ENCODE measurements at regions of chr6 and their contacts with region 1.

Region 1: GRCh38 chr6:137707590-137708360 is 159.3 kb upstream of the TNFAIP3 start:
- DNase-seq: peak; percentile 90 to 96 (median 92)
- H3K4me3 ChIP-seq: peak overlapping the region in 1 of 3 experiments; percentile 32
- H3K4me3 Mint-ChIP-seq: peak overlapping the region; percentile 65 to 88
- H3K27ac ChIP-seq: peak overlapping the region in 1 of 2 donors; percentile 62
- H3K27ac Mint-ChIP-seq: peak overlapping the region; percentile 82 to 95 (median 91)
- H3K4me1 ChIP-seq: peaks cover 25 to 28% of the 10 kb centered on the region in 2 donors
- H3K4me1 Mint-ChIP-seq: peaks cover 41% of the 10 kb centered on the region
- H3K27me3 ChIP-seq: no peaks in the 10 kb centered on the region
- H3K27me3 Mint-ChIP-seq: peaks cover 0 to 3% (median 2%) of the 10 kb centered on the region in 3 donors
- CTCF ChIP-seq: peak; percentile 93

Region 2: GRCh38 chr6:137791281-137792159 is 83.7 kb after region 1 on chr6:
- intact Hi-C with region 1: loop called in 1 of 2 experiments (anchors 5 kb)
- DNase-seq: no peak
- H3K4me3 ChIP-seq: no peak overlapping the region
- H3K4me3 Mint-ChIP-seq: no peak overlapping the region
- H3K27ac ChIP-seq: peak overlapping the region in 1 of 2 donors; percentile 83
- H3K27ac Mint-ChIP-seq: peak overlapping the region in 4 of 7 donors; percentile 27 to 99 (median 94)
- H3K4me1 ChIP-seq: peaks cover 25 to 29% of the 10 kb centered on the region in 2 donors
- H3K4me1 Mint-ChIP-seq: peaks cover 27% of the 10 kb centered on the region
- H3K27me3 ChIP-seq: no peaks in the 10 kb centered on the region
- H3K27me3 Mint-ChIP-seq: peaks cover 0 to 8% (median 0%) of the 10 kb centered on the region in 3 donors
- CTCF ChIP-seq: no peak

Region 3: GRCh38 chr6:137866914-137867684 is 159.3 kb after region 1 on chr6 and contains the start of gene TNFAIP3:
- intact Hi-C with region 1: loop called (anchors 2 to 5 kb)
- DNase-seq: peak; percentile 96 to 98 (median 97)
- H3K4me3 ChIP-seq: peak within 1 kb of the TSS; percentile 73 to 93 (median 87)
- H3K4me3 Mint-ChIP-seq: peak within 1 kb of the TSS; percentile 93 to 96
- H3K27ac ChIP-seq: peak within 1 kb of the TSS; percentile 97 to 98
- H3K27ac Mint-ChIP-seq: peak within 1 kb of the TSS; percentile 99 to 100 (median 99)
- H3K4me1 ChIP-seq: peaks cover 45 to 52% of the 10 kb centered on the region in 2 donors
- H3K4me1 Mint-ChIP-seq: peaks cover 60% of the 10 kb centered on the region
- H3K27me3 ChIP-seq: no peaks in the 10 kb centered on the region
- H3K27me3 Mint-ChIP-seq: peaks cover 0 to 2% (median 1%) of the 10 kb centered on the region in 3 donors
- CTCF ChIP-seq: peak; percentile 79
- polyA plus RNA-seq, gene TNFAIP3: 35.5 to 273 (median 38.4) TPM

Region 4: DNA sequence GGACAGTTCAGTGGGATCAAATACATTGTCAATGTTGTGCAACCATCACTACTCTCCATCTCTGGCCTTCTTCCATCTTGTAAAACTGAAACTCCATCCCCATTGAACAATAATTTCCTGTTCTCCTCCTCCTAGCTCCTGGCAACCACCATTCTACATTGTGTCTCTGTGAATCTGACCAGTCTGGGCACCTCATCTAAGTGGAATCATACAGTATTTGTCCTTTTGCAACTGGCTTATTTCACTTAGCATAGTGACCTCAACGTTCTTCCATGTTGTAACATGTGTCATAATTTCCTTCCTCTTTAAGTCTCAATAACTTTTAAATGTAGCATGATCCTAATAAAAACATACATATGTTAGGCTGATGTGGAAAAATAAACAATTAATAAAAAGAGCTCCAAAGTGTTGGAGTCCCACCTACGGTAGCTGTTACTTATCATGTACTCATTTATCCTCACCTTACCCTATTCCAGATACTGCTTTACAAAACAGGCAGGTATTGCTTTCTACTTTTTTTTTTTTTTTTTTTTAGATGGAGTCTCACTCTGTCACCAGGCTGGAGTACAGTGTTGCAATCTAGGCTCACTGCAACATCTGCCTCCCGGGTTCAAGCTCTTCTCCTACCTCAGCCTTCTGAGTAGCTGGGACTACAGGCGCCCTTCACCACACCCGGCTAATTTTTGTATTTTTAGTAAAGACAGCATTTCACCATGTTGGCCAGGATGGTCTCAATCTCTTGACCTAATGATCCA is 251.2 kb after region 1 on chr6:
- intact Hi-C with region 1: loop called in 1 of 2 experiments (anchors 5 kb)
- DNase-seq: peak; percentile 86 to 96 (median 95)
- H3K4me3 ChIP-seq: peak overlapping the region in 1 of 3 experiments; percentile 38
- H3K4me3 Mint-ChIP-seq: peak overlapping the region in 1 of 2 donors; percentile 47
- H3K27ac ChIP-seq: peak overlapping the region; percentile 80 to 87
- H3K27ac Mint-ChIP-seq: peak overlapping the region; percentile 88 to 99 (median 97)
- H3K4me1 ChIP-seq: peaks cover 32 to 45% of the 10 kb centered on the region in 2 donors
- H3K4me1 Mint-ChIP-seq: peaks cover 43% of the 10 kb centered on the region
- H3K27me3 ChIP-seq: no peaks in the 10 kb centered on the region
- H3K27me3 Mint-ChIP-seq: peaks cover 0 to 3% (median 0%) of the 10 kb centered on the region in 3 donors
- CTCF ChIP-seq: no peak